GM12878 (cell line): ENCODE measurements at regions of chr5 and their contacts with region 1.

Region 1: GRCh38 chr5:144467792-144468191 is 297.1 kb downstream of the KCTD16 start:
- DNase-seq: no peak
- ATAC-seq: no peak; the same call in 1 of the 3 replicates
- H3K4me3 ChIP-seq: no peak overlapping the region
- H3K27ac ChIP-seq: no peak overlapping the region
- H3K4me1 ChIP-seq: no peaks in the 10 kb centered on the region
- H3K27me3 ChIP-seq: no peaks in the 10 kb centered on the region
- CTCF ChIP-seq: peak in 2 of 3 experiments; percentile 31 to 46; a peak in 3 of 6 replicates
- EP300 ChIP-seq: no peak
- POLR2A ChIP-seq: no peak
- RAD21 ChIP-seq: peak; percentile 19; the same call in 1 of the 2 replicates

Region 2: DNA sequence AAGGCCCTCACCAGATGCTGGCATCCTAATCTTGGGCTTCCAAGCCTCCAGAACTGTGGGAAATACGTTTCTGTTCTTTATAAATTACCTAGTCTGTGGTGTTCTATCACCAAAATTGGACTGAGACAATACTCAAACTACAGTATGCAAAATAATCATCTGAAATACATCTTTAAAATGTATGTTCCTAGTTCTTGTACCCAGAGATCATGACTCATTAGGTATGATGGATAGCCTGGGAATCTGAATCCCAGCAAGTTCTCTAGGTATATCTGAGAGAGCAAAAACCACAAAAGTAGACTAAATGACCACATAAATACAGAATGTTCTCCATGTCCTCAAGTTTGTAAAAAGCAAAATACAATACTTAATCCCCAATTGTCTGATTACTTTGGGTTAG is 463.6 kb before region 1 on chr5:
- CTCF ChIA-PET with region 1: no interaction called
- POLR2A ChIA-PET with region 1: no interaction called
- RAD21 ChIA-PET with region 1: no interaction called
- SMC1A ChIA-PET with region 1: no interaction called
- in situ Hi-C with region 1: no loop called
- intact Hi-C with region 1: no loop called
- DNase-seq: no peak
- ATAC-seq: no peak
- H3K4me3 ChIP-seq: no peak overlapping the region
- H3K27ac ChIP-seq: no peak overlapping the region
- H3K4me1 ChIP-seq: no peaks in the 10 kb centered on the region
- H3K27me3 ChIP-seq: no peaks in the 10 kb centered on the region
- CTCF ChIP-seq: no peak
- EP300 ChIP-seq: no peak
- POLR2A ChIP-seq: no peak
- RAD21 ChIP-seq: no peak

Region 3: GRCh38 chr5:145237843-145238242 is 770.1 kb after region 1 on chr5:
- CTCF ChIA-PET with region 1: no interaction called
- POLR2A ChIA-PET with region 1: no interaction called
- RAD21 ChIA-PET with region 1: interaction called, 6 read pairs
- SMC1A ChIA-PET with region 1: no interaction called
- in situ Hi-C with region 1: no loop called
- intact Hi-C with region 1: loop called (anchors 5 kb)
- DNase-seq: no peak
- ATAC-seq: peak; percentile 89
- H3K4me3 ChIP-seq: no peak overlapping the region
- H3K27ac ChIP-seq: no peak overlapping the region
- H3K4me1 ChIP-seq: no peaks in the 10 kb centered on the region
- H3K27me3 ChIP-seq: no peaks in the 10 kb centered on the region
- CTCF ChIP-seq: peak; percentile 50 to 60 (median 55); a peak in 5 of 6 replicates
- EP300 ChIP-seq: no peak
- POLR2A ChIP-seq: no peak
- RAD21 ChIP-seq: peak; percentile 75